ENCODE measurements at regions of chr22 and their contacts with region 1.

Region 1: DNA sequence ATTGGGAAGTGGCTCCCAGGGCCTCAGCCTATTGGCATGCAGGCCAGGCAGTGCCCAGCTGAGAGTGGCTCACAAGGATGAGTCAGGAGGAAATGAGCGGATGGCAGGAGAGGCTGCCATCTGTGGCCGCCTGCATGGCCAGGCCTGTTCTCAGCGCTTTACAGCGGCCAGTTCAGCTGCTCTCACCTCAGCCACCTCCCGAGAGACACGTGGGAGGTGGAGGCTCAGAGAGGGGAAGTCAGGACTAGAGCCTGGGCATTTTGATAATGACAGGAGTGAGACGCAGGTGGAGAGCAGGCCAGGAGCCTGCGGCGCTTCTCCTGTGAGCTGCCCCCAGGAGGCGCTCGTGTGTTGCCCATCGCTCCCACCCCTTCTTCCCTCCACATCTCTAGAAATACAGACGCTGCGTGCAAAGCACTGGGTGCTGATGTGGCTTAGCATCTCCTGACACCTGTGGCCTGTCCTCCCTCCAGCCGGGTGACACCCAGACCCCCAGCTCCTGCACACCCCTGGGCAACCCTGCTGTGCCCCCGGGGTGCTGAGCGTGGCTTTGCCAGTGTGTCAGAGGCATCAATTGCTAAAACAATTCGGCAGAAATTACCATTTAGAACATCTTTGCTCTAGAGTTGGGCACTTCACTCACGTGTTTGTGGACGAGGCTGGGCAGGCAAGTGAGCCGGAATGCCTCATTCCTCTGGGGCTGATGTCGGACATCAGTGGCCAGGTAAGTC is 21.4 kb upstream of the PANX2 start:
- DNase-seq: no peak
- H3K4me3 ChIP-seq: no peak overlapping the region
- CTCF ChIP-seq: peak; percentile 77

Region 2: GRCh38 chr22:49948958-49949913 is 199.9 kb before region 1 on chr22:
- CTCF ChIA-PET with region 1: no interaction called
- POLR2A ChIA-PET with region 1: no interaction called
- DNase-seq: no peak
- H3K4me3 ChIP-seq: no peak overlapping the region
- CTCF ChIP-seq: no peak

Region 3: DNA sequence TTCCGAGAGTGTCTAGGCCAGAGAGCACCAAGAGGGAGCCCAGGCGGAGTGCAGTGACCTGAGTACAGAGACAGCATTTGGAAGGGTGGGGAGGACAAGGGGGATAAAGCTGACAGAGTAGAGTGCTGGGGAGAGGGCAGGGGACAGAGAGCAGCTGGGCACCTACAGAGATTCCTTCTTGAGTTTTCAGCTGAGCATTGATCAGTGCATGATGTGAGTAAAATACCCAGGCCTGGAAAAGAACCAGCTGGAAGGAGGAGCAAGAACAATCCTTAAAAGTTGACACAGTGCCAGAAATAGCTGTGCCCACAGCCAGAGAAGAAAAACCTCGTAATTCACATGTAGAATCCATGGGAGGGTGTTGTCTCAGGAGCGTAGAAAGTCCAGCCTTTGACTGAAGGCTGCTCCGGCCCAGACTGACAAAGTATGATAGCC is 12.6 kb before region 1 on chr22:
- CTCF ChIA-PET with region 1: interaction called, 11 read pairs
- POLR2A ChIA-PET with region 1: no interaction called
- DNase-seq: no peak
- H3K4me3 ChIP-seq: no peak overlapping the region
- CTCF ChIP-seq: no peak

Region 4: GRCh38 chr22:50165430-50166123 is 16.4 kb after region 1 on chr22:
- CTCF ChIA-PET with region 1: interaction called, 11 read pairs
- POLR2A ChIA-PET with region 1: no interaction called
- DNase-seq: no peak
- H3K4me3 ChIP-seq: no peak overlapping the region
- CTCF ChIP-seq: no peak

Region 5: DNA sequence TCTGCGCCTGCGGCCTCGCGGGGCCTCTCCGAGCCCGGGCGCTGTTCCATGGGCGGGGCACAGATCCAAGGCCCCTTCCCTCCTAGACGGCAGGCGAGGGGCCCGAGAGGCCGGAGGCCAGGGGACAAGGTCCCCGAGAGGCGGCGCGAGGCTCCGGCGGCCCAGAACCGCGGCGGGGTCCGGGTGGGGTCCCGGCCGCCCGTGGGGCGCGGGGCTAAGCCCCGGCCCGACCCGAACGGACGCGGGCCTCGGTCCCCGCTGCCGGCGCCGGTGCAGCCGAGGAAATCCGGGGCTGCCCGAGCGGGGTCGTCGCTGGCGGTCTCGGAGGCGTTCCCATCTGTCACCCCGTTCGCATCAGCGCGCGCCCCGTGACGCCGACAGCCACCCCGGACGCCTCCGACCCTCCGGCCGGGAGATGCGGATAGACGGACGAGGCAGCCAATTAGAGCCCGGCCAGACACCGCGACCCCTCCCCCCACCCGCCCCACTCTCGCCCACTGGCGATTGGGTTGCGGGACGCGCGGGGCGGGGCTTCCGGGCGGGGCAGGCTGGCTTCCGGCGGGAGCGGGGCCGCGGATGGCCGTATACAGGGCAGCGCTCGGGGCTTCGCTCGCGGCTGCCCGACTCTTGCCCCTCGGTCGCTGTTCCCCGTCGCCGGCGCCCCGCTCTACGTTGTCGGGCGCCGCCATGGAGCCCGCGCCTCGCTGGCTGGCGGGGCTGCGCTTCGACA is 51.5 kb after region 1 on chr22 and contains the start of gene SELENOO:
- CTCF ChIA-PET with region 1: interaction called, 13 read pairs
- POLR2A ChIA-PET with region 1: no interaction called
- DNase-seq: no peak
- H3K4me3 ChIP-seq: peak within 1 kb of the TSS; percentile 71
- CTCF ChIP-seq: no peak

Region 6: GRCh38 chr22:50209893-50210292 is 60.7 kb after region 1 on chr22:
- CTCF ChIA-PET with region 1: interaction called, 62 read pairs
- POLR2A ChIA-PET with region 1: no interaction called
- DNase-seq: no peak
- H3K4me3 ChIP-seq: no peak overlapping the region
- CTCF ChIP-seq: peak; percentile 81

Region 7: DNA sequence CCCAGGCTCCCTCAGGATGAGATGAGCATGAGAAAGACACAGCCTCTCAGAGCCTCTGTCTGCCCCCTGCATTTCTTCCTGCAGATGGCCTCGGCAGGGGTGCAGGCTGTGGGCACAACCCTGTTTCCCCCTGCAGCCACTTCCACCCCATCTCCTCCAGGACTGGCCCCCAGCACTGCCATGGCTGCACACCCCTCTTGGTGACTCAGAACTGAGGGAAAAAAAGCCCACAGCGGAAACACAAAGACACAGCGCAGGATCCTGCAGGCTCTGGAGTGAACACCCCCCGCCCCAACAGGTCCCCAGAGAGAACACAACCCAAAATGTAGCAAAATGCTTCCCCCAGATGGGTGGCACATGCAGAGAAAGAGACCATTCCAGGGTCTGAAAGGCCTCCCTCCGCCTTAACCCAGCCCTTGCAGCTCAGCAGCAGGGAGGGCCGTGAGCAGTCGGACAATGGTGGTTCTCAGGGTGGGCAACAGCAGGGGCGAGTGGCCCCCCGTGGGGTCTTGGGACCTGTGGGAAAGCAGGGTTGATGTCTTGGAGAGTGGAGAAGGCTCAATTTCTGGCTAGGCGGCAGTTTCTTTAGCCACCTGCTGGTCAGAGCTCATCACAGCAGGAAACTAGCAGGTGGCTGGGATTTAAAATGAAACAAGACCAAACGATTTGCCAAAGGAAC is 87.7 kb after region 1 on chr22:
- CTCF ChIA-PET with region 1: interaction called, 58 read pairs
- POLR2A ChIA-PET with region 1: no interaction called
- DNase-seq: no peak
- H3K4me3 ChIP-seq: no peak overlapping the region
- CTCF ChIP-seq: peak; percentile 59

Measured in AG04449 (cell line).